Mammary epithelial cell (primary cell): ENCODE measurements at regions of chr3 and their contacts with region 1.

Region 1: GRCh38 chr3:128845778-128846485 is 33.5 kb upstream of the ACAD9 start:
- DNase-seq: peak; percentile 59
- H3K4me3 ChIP-seq: peak overlapping the region in 2 of 3 experiments; percentile 24 to 28
- H3K27ac ChIP-seq: no peak overlapping the region
- H3K4me1 ChIP-seq: peaks cover 7% of the 10 kb centered on the region
- H3K27me3 ChIP-seq: no peaks in the 10 kb centered on the region
- CTCF ChIP-seq: peak; percentile 26 to 52

Region 2: GRCh38 chr3:128665362-128666038 is 180.4 kb before region 1 on chr3:
- CTCF ChIA-PET with region 1: no interaction called
- dilution Hi-C with region 1: no loop called
- in situ Hi-C with region 1: no loop called
- intact Hi-C with region 1: loop called (anchors 1 kb)
- DNase-seq: no peak
- H3K4me3 ChIP-seq: no peak overlapping the region
- H3K27ac ChIP-seq: no peak overlapping the region
- H3K4me1 ChIP-seq: no peaks in the 10 kb centered on the region
- H3K27me3 ChIP-seq: no peaks in the 10 kb centered on the region
- CTCF ChIP-seq: peak in 1 of 2 donors; percentile 10

Region 3: GRCh38 chr3:128814519-128815317 is 31.2 kb before region 1 on chr3:
- CTCF ChIA-PET with region 1: no interaction called
- dilution Hi-C with region 1: loop called (anchors 5 kb)
- in situ Hi-C with region 1: no loop called
- intact Hi-C with region 1: no loop called
- DNase-seq: no peak
- H3K4me3 ChIP-seq: no peak overlapping the region
- H3K27ac ChIP-seq: no peak overlapping the region
- H3K4me1 ChIP-seq: no peaks in the 10 kb centered on the region
- H3K27me3 ChIP-seq: no peaks in the 10 kb centered on the region
- CTCF ChIP-seq: no peak

Region 4: GRCh38 chr3:128932516-128933212 is 86.7 kb after region 1 on chr3:
- CTCF ChIA-PET with region 1: no interaction called
- dilution Hi-C with region 1: loop called (anchors 5 kb)
- in situ Hi-C with region 1: no loop called
- intact Hi-C with region 1: no loop called
- DNase-seq: no peak
- H3K4me3 ChIP-seq: no peak overlapping the region
- H3K27ac ChIP-seq: no peak overlapping the region
- H3K4me1 ChIP-seq: peaks cover 4% of the 10 kb centered on the region
- H3K27me3 ChIP-seq: no peaks in the 10 kb centered on the region
- CTCF ChIP-seq: no peak

Region 5: GRCh38 chr3:129702934-129703712 is 857.2 kb after region 1 on chr3:
- CTCF ChIA-PET with region 1: no interaction called
- dilution Hi-C with region 1: no loop called
- in situ Hi-C with region 1: no loop called
- intact Hi-C with region 1: no loop called
- DNase-seq: peak; percentile 47
- H3K4me3 ChIP-seq: no peak overlapping the region
- H3K27ac ChIP-seq: no peak overlapping the region
- H3K4me1 ChIP-seq: no peaks in the 10 kb centered on the region
- H3K27me3 ChIP-seq: no peaks in the 10 kb centered on the region
- CTCF ChIP-seq: no peak